PC-3 (cell line): ENCODE measurements at regions of chrX and their contacts with region 1.

Region 1: DNA sequence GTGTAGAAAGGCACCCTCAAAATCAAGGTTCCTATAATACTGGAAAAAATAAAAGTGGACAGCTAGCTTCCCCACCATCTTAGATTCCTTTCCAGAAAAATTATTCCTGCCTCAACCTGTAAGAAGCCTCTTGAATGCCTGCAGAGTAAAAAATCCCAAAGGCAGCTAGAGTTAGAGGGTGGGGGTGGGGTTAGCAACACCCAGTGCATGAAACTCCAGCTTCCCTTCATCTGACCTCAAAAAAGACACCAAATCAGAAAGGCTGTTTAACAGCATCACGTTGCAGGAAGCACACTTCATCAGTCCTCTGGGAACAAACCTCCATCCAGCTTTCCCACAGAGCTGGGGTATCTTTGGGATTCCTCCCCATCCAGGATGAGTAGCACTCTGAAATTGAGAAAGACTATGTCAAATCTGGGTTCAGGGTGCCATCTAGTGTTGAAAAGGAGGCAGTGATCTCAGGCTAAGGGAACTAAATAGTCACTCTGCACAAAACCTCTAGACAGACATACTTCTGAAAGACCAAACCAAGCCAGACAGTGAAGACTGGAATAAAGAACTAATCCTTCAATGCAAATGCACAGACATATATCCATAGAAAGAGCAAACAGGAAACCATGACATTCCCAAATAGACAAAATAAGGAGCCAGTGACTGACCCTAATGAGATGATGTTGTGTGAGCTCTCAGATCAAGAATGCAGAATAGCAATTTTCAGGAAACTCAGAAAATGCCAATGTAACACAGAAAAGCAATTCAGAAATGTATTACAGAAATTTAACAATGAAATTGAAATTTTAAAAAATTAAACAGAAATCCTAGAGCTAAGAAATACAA is 97.9 kb downstream of the ARHGEF9 start:
- DNase-seq: peak; percentile 68
- ATAC-seq: peak; percentile 69
- H3K4me3 ChIP-seq: no peak overlapping the region
- H3K27ac ChIP-seq: no peak overlapping the region
- H3K4me1 ChIP-seq: no peaks in the 10 kb centered on the region
- H3K27me3 ChIP-seq: no peaks in the 10 kb centered on the region
- CTCF ChIP-seq: peak; percentile 77

Region 2: DNA sequence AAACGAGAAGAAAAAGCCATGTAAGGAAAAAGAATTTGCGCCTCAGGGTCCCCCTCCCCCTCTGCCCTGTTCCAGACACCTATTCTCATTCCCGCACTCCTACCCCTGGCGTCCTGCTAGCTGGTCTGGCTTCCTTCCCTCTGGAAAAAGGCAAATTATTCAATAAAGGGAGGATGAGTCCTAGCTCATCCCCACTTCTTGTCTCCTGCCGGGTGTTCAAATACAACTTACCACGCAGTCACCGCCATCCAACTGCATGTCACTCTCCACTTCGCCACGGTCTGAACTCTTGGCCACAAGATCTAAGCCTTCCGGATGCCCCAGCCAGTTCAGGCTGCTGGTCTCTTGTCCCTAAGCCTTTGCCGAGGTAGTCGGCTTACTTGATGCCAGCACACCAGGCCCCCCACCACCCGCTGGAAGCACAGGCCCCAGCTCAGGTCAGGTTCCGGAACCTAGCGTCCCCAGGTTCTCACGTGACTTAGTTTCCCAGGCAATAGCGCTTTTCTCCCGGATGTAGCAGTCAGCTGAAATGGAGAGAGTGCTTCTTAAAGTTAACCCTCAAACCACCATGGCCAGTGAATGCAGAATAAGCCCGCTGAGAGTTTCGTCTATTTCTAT is 126.4 kb before region 1 on chrX:
- CTCF ChIA-PET with region 1: no interaction called
- POLR2A ChIA-PET with region 1: no interaction called
- intact Hi-C with region 1: loop called (anchors 5 kb)
- DNase-seq: peak; percentile 69
- ATAC-seq: peak; percentile 86
- H3K4me3 ChIP-seq: peak overlapping the region; percentile 90
- H3K27ac ChIP-seq: peak overlapping the region; percentile 56
- H3K4me1 ChIP-seq: peaks cover 8% of the 10 kb centered on the region; the same call in 1 of the 2 replicates
- H3K27me3 ChIP-seq: no peaks in the 10 kb centered on the region
- CTCF ChIP-seq: no peak